Breast epithelium (tissue), 4 donors: ENCODE measurements at regions of chr6 and their contacts with region 1.

Region 1: DNA sequence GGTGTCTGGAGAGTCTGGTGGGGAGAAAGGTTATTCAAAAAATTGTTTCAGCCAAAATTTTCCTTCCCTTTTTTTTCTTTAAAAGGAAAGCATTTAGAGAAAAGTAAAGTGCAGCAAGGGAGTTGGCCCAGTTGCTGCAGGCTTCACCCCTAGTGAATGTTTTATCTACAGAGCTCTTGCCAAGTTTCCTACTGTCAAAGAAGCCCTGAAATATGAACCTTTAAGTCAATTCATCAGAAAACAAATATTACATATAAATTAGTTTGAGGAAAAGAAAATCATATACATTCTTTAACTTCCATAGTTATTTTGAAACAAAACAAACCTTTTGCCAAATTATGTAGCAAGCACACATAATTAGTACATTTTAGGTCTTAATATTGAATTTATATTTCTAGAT is 25.0 kb upstream of the HMGCLL1 start:
- DNase-seq: no peak
- H3K4me3 ChIP-seq: no peak overlapping the region
- H3K27ac ChIP-seq: no peak overlapping the region
- H3K4me1 ChIP-seq: no peaks in the 10 kb centered on the region
- H3K27me3 ChIP-seq: no peaks in the 10 kb centered on the region
- CTCF ChIP-seq: no peak
- POLR2A ChIP-seq: no peak

Region 2: GRCh38 chr6:55578537-55579363 is 25.3 kb before region 1 on chr6 and contains the start of gene HMGCLL1:
- intact Hi-C with region 1: no loop called
- DNase-seq: peak in 1 of 2 donors; percentile 19
- H3K4me3 ChIP-seq: peak within 1 kb of the TSS; percentile 38 to 75 (median 64)
- H3K27ac ChIP-seq: peak within 1 kb of the TSS; percentile 45 to 72
- H3K4me1 ChIP-seq: no peaks in the 10 kb centered on the region
- H3K27me3 ChIP-seq: no peaks in the 10 kb centered on the region
- CTCF ChIP-seq: no peak
- POLR2A ChIP-seq: no peak
- total RNA-seq, gene HMGCLL1: 2.6 to 6.9 (median 3.7) TPM

Region 3: GRCh38 chr6:55636405-55637102 is 32.5 kb after region 1 on chr6:
- intact Hi-C with region 1: no loop called
- DNase-seq: no peak
- H3K4me3 ChIP-seq: no peak overlapping the region
- H3K27ac ChIP-seq: no peak overlapping the region
- H3K4me1 ChIP-seq: no peaks in the 10 kb centered on the region
- H3K27me3 ChIP-seq: no peaks in the 10 kb centered on the region
- CTCF ChIP-seq: no peak
- POLR2A ChIP-seq: no peak

Region 4: DNA sequence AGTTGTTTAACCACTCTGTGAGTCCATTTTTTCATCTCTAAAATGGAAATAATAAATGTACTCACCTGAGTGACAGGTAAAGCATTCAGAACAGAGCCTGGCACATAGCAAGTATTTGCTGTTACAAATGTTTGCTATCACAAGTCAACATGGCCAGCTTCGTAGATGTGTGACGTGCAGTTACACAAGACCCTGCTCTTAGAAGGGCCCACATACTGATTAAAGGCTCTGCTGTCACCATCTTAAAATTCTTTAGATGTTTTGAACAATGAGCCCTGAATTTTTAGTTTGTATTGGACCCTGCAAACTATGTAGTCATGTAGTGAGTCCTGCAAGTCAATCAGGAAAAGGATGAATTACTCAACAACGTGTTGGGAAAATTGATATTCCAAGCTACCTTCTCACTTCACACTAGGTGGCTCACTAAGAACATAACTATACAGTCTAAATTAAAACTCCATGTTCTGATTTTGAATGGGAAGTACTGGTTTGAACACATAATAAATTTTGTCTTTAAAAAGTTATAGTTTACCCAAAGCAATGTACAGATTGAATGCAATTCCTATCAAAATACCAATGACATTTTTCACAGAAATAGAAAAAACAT is 1402.2 kb after region 1 on chr6:
- intact Hi-C with region 1: loop called (anchors 10 kb)
- DNase-seq: no peak
- H3K4me3 ChIP-seq: no peak overlapping the region
- H3K27ac ChIP-seq: no peak overlapping the region
- H3K4me1 ChIP-seq: no peaks in the 10 kb centered on the region
- H3K27me3 ChIP-seq: no peaks in the 10 kb centered on the region
- CTCF ChIP-seq: no peak
- POLR2A ChIP-seq: no peak